IMR-90 (cell line): ENCODE measurements at regions of chr11 and their contacts with region 1.

Region 1: DNA sequence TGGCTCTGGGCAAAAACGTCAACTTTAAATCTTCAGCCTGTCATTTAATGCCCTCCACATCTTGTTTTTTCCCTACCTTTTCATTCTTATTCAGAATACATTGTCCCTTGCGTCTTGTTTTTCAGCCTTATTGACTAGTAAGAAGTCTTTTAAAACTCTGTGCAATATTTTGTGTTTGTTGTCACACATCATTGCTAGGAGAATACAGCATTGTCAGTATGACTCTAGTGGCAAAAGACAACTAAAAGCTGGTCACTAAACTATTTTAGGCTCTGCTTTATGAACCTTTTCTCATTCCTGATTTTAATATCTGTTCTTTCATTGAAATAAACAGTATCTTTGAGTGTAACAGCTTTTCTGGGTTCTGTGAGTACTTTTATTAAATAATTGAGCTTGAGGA is 447.8 kb upstream of the CCDC179 start:
- DNase-seq: no peak
- ATAC-seq: no peak; the same call in 1 of the 2 replicates
- H3K4me3 ChIP-seq: no peak overlapping the region
- H3K27ac ChIP-seq: no peak overlapping the region
- H3K4me1 ChIP-seq: peaks cover 4% of the 10 kb centered on the region
- H3K27me3 ChIP-seq: no peaks in the 10 kb centered on the region
- CTCF ChIP-seq: no peak
- POLR2A ChIP-seq: no peak
- RAD21 ChIP-seq: no peak

Region 2: DNA sequence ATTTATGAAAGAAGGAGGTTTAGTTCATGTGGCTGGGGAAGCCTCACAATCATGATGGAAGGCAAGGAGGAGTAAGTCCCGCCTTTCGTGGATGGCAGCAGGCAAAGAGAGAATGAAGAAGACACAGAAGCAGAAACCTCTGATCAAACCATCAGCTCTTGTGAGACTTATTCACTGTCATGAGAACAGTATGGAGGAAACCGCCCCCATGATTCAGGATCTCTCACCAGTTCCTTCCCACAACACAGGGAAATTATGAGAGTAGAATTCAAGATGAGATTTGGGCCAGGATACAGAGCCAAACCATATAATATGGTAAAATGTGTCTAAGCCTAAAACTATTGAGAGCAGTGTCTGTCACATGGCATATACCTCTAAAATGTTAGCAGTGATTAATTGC is 56.0 kb after region 1 on chr11:
- CTCF ChIA-PET with region 1: no interaction called
- POLR2A ChIA-PET with region 1: no interaction called
- dilution Hi-C with region 1: no loop called
- in situ Hi-C with region 1: loop called (anchors 10 kb)
- intact Hi-C with region 1: no loop called
- DNase-seq: peak; percentile 2
- ATAC-seq: no peak
- H3K4me3 ChIP-seq: no peak overlapping the region
- H3K27ac ChIP-seq: no peak overlapping the region
- H3K4me1 ChIP-seq: no peaks in the 10 kb centered on the region; the same call in 1 of the 2 replicates
- H3K27me3 ChIP-seq: no peaks in the 10 kb centered on the region
- CTCF ChIP-seq: no peak
- POLR2A ChIP-seq: no peak
- RAD21 ChIP-seq: no peak

Region 3: DNA sequence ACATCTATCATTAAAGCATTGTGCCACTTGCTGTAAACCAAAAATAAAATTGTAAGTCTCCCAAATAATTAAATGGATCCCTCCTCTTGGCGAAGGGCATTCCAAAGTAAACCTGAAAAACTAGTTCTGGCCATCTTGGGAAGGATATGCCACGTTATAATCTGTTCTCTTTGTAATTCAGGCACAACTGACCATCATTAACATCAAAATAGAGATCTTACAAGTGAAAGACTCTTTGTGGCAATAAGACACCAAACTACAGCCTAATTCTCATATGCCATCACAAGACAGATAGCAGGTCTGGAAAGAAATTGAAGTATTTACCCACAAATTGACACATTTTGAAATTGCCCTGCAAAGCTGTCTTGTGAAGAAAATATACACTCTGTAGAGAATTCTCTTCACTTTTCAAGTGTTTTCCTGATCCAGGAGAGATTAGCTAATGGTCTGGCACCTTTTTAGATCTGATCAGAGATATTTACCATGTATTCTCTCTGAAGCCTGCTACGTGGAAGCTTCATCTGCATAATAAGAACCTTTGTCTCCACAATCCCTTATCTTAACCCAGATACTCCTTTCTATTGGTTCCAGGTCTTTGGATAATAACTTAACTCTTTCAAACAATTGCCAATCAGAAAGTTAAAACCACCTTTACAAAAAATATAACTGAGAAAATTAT is 182.7 kb after region 1 on chr11:
- CTCF ChIA-PET with region 1: no interaction called
- POLR2A ChIA-PET with region 1: no interaction called
- dilution Hi-C with region 1: no loop called
- in situ Hi-C with region 1: no loop called
- intact Hi-C with region 1: no loop called
- DNase-seq: no peak
- ATAC-seq: no peak
- H3K4me3 ChIP-seq: no peak overlapping the region
- H3K27ac ChIP-seq: no peak overlapping the region
- H3K4me1 ChIP-seq: no peaks in the 10 kb centered on the region
- H3K27me3 ChIP-seq: no peaks in the 10 kb centered on the region
- CTCF ChIP-seq: no peak
- POLR2A ChIP-seq: no peak
- RAD21 ChIP-seq: no peak

Region 4: DNA sequence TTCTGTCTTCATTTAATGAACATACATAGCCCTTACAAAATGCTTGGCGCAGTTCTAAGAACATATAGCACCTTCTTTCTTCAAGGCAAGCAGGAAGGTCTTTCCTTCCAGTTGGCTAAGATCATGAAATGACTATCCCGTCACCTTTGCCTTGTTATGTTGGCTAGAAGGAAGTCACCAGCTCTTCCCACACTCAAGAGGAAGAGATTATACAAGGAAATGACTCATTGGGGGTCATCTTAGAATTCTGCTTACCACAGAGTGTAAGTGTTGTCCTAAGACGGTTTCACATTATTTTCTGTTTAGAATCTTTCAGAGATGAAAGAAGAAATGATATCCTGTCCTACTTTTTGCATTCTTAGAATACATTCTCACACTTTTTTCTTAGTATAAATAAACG is 380.8 kb after region 1 on chr11:
- CTCF ChIA-PET with region 1: no interaction called
- POLR2A ChIA-PET with region 1: no interaction called
- dilution Hi-C with region 1: no loop called
- in situ Hi-C with region 1: no loop called
- intact Hi-C with region 1: no loop called
- DNase-seq: peak; percentile 70
- ATAC-seq: peak; percentile 46
- H3K4me3 ChIP-seq: no peak overlapping the region
- H3K27ac ChIP-seq: no peak overlapping the region
- H3K4me1 ChIP-seq: 0 out of 2 replicates have a peak, but pooled peaks cover 2% of the 10 kb centered on the region
- H3K27me3 ChIP-seq: no peaks in the 10 kb centered on the region
- CTCF ChIP-seq: no peak
- POLR2A ChIP-seq: no peak
- RAD21 ChIP-seq: no peak